ENCODE measurements at regions of chr12 and their contacts with region 1.

Region 1: GRCh38 chr12:120437754-120438494 is at the start of gene COX6A1:
- DNase-seq: peak; percentile 99
- ATAC-seq: peak; percentile 96
- H3K4me3 ChIP-seq: peak within 1 kb of the TSS; percentile 65 to 71
- H3K27ac ChIP-seq: peak within 1 kb of the TSS; percentile 81
- H3K4me1 ChIP-seq: peaks cover 8 to 26% of the 10 kb centered on the region in 2 experiments
- H3K27me3 ChIP-seq: no peaks in the 10 kb centered on the region
- CTCF ChIP-seq: 0 out of 6 replicates have a peak, but pooled peaks of 1 of the 3 experiments have one; percentile 9
- POLR2A ChIP-seq: peak; percentile 92
- RAD21 ChIP-seq: no peak
- total RNA-seq, gene COX6A1: 464 TPM

Region 2: DNA sequence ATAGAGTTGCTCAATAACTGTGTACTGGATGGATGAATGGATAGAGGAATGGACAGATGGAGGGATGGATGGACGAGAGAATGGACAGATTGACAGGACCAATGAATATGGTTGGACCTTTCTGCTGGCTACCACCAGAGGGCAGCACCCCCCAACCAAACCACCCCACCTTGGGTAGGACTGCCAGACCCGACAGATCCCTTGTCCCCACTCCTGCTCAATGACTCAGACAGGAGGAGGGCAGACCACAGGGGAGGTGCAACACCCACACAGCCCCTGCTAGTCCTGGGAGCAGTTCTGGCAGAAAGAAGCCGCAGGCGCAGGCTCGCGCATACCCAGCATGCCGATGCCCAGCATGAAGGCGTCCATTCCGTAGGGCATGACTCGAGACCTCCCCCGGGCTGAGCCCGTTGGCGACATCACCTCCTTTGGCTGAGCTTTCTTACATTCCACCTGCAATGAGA is 81.3 kb before region 1 on chr12:
- CTCF ChIA-PET with region 1: interaction called, 3 read pairs
- POLR2A ChIA-PET with region 1: no interaction called
- RAD21 ChIA-PET with region 1: interaction called in 1 of 2 experiments, 3 read pairs
- intact Hi-C with region 1: loop called (anchors 2 kb)
- DNase-seq: peak; percentile 57
- ATAC-seq: peak; percentile 96
- H3K4me3 ChIP-seq: no peak overlapping the region
- H3K27ac ChIP-seq: no peak overlapping the region
- H3K4me1 ChIP-seq: peaks cover 0 to 14% of the 10 kb centered on the region in 2 experiments; a peak in 2 of 4 replicates
- H3K27me3 ChIP-seq: no peaks in the 10 kb centered on the region
- CTCF ChIP-seq: peak; percentile 79 to 91 (median 87)
- POLR2A ChIP-seq: no peak
- RAD21 ChIP-seq: peak; percentile 89

Region 3: GRCh38 chr12:120640840-120641833 is 203.2 kb after region 1 on chr12:
- CTCF ChIA-PET with region 1: interaction called, 3 read pairs
- POLR2A ChIA-PET with region 1: no interaction called
- RAD21 ChIA-PET with region 1: no interaction called
- intact Hi-C with region 1: loop called (anchors 10 kb)
- DNase-seq: no peak
- ATAC-seq: peak; percentile 73
- H3K4me3 ChIP-seq: peak overlapping the region; percentile 51 to 63
- H3K27ac ChIP-seq: no peak overlapping the region
- H3K4me1 ChIP-seq: peaks cover 9 to 19% of the 10 kb centered on the region in 2 experiments; a peak in 3 of 4 replicates
- H3K27me3 ChIP-seq: peaks cover 4% of the 10 kb centered on the region; the same call in 1 of the 2 replicates
- CTCF ChIP-seq: no peak
- POLR2A ChIP-seq: no peak
- RAD21 ChIP-seq: no peak

Region 4: DNA sequence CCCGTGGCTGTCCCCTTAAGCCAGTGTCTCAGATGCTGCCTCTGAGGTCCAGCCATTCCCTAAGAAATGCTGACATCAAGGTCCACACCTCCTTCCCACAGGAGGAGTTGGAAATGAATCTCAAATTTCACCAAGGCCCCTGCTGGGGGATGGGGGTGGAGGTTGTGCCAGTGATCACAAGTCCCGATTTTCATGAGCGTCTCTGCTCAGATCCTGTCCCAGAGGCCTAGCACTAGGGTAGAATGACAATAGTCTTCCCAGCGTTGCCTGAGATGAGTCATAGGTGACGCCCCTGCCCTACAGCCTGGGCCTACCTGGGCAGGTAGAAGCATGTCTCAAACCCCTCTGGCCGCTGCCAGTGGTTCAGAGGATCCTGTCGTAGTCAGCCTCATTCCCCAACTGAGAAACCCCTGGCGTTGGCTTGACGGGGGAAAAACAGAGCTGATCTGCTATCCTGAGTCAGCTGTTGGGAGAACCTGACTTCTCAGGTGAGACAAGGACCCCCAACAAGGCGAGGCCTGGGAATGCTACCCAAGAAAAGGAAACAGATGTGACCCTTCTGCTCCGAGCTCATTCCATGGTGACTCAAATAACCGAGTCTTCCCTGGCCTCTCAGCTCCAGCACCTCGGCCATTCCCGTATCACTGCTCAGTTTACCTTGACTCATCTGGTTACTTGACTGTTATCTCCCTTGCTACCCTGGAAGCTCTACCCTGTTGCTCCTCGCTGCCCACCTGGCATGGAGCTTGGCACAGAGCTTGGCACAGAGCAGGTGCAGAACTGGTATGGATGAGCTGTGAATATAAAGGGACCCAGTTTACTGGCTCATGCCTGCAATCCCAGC is 488.0 kb after region 1 on chr12:
- CTCF ChIA-PET with region 1: no interaction called
- POLR2A ChIA-PET with region 1: no interaction called
- RAD21 ChIA-PET with region 1: no interaction called
- intact Hi-C with region 1: no loop called
- DNase-seq: peak; percentile 89
- ATAC-seq: peak; percentile 80
- H3K4me3 ChIP-seq: peak overlapping the region; percentile 26 to 43
- H3K27ac ChIP-seq: peak overlapping the region; percentile 100
- H3K4me1 ChIP-seq: peaks cover 29 to 36% of the 10 kb centered on the region in 2 experiments
- H3K27me3 ChIP-seq: no peaks in the 10 kb centered on the region
- CTCF ChIP-seq: no peak
- POLR2A ChIP-seq: peak; percentile 21
- RAD21 ChIP-seq: peak; percentile 28; the same call in 1 of the 2 replicates